CD8-positive, alpha-beta T cell (primary cell): ENCODE measurements at regions of chr1 and their contacts with region 1.

Region 1: DNA sequence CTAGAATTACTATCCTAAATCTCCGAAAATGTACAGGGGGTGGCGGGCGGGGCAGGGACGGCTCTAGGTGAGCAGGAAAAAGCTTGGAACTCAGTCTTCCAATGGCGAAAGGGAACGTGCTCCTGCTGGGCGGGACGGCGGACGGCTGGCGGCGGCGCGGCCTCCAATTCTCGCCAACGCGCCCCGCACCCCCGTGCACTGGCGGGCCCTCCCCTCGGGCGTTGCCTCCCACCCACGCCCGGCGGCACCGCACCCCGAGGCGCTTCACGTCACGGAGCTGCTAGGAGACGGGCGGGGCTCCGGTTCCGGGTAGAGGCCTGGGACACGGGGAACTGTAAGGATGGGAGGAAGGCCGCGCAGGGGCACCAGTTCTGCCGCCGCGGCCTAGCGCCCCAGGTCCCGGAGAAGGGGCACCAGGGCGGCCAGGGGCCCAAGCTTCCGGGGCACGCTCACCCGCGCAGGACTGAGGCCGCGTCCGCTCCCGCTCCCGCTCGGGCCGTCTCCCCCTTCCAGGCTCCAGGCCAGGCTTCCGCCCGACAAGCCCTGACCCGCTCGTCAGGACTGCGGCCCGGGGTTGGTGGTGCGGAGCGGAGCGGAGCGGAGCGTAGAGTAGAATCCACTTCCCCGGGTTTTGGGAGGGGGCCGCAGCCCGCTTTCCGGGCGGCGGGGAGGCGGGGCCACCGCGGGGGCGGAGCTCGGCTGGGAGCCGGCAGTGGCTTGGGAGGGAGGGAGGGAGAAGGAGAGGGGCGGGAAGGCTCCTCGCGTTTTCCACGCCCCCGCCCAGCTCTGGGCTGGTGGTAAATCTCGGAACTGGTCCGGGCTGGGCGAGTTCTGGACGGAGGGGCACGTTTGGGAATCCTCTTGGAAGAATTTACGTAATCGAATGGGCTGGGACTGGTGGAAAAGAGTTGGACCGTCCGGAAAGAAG is at the start of gene DDX59:
- DNase-seq: peak; percentile 67 to 93 (median 89)
- ATAC-seq: peak; percentile 89
- H3K4me3 ChIP-seq: peak within 1 kb of the TSS; percentile 82 to 94
- H3K4me3 Mint-ChIP-seq: peak within 1 kb of the TSS; percentile 94
- H3K27ac ChIP-seq: peak within 1 kb of the TSS; percentile 95 to 98
- H3K27ac Mint-ChIP-seq: peak within 1 kb of the TSS; percentile 94
- H3K4me1 ChIP-seq: peaks cover 21% of the 10 kb centered on the region
- H3K4me1 Mint-ChIP-seq: peaks cover 42% of the 10 kb centered on the region
- H3K27me3 ChIP-seq: no peaks in the 10 kb centered on the region
- H3K27me3 Mint-ChIP-seq: no peaks in the 10 kb centered on the region
- CTCF ChIP-seq: no peak
- total RNA-seq, gene DDX59: 24.0 to 32.9 TPM

Region 2: DNA sequence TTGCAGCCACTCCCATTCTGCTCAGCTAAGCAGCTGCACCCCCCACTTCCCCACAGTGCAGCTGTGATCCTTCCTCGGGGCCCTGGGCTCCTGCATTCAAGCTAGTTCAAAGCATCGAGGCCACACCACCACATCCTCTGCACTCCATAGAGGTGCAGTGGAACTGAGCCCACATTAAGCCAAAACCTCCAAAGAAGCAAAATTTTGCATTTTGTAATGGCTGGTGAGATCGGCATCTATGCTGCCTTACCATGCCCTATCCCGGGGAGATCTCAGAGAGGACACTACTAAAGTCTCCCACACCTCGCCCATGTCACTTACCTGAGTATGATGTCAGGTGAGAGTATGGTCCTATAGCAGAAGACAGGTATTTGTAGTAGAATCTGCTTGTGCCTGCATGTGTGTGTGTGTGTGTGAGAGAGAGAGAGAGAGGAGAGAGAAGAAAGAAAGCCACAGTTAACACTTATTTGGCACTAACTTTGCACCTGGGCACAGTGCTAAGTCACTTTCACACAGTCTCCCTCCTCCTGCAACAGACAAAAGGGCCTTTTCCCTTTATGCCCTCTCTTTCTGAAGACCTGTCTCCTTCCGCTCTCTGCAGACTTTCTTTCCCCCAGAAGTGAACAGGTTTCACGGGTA is 138.8 kb before region 1 on chr1:
- CTCF ChIA-PET with region 1: no interaction called
- POLR2A ChIA-PET with region 1: no interaction called
- intact Hi-C with region 1: loop called in 1 of 2 experiments (anchors 5 kb)
- DNase-seq: peak; percentile 36 to 85 (median 55)
- ATAC-seq: peak; percentile 96
- H3K4me3 ChIP-seq: peak overlapping the region; percentile 12 to 27
- H3K4me3 Mint-ChIP-seq: peak overlapping the region; percentile 71
- H3K27ac ChIP-seq: peak overlapping the region; percentile 2 to 14
- H3K27ac Mint-ChIP-seq: peak overlapping the region; percentile 83
- H3K4me1 ChIP-seq: peaks cover 32% of the 10 kb centered on the region
- H3K4me1 Mint-ChIP-seq: peaks cover 40% of the 10 kb centered on the region
- H3K27me3 ChIP-seq: no peaks in the 10 kb centered on the region
- H3K27me3 Mint-ChIP-seq: no peaks in the 10 kb centered on the region
- CTCF ChIP-seq: no peak

Region 3: GRCh38 chr1:200558866-200559459 is 110.6 kb before region 1 on chr1:
- CTCF ChIA-PET with region 1: no interaction called
- POLR2A ChIA-PET with region 1: no interaction called
- intact Hi-C with region 1: no loop called
- DNase-seq: peak in 2 of 9 experiments; percentile 40 to 58
- ATAC-seq: no peak
- H3K4me3 ChIP-seq: no peak overlapping the region
- H3K4me3 Mint-ChIP-seq: no peak overlapping the region
- H3K27ac ChIP-seq: no peak overlapping the region
- H3K27ac Mint-ChIP-seq: no peak overlapping the region
- H3K4me1 ChIP-seq: no peaks in the 10 kb centered on the region
- H3K4me1 Mint-ChIP-seq: no peaks in the 10 kb centered on the region
- H3K27me3 ChIP-seq: no peaks in the 10 kb centered on the region
- H3K27me3 Mint-ChIP-seq: no peaks in the 10 kb centered on the region
- CTCF ChIP-seq: peak; percentile 58

Region 4: GRCh38 chr1:200738740-200739498 is 69.3 kb after region 1 on chr1 and contains the start of gene CAMSAP2:
- CTCF ChIA-PET with region 1: no interaction called
- POLR2A ChIA-PET with region 1: interaction called, 6 read pairs
- intact Hi-C with region 1: loop called (anchors 1 to 5 kb)
- DNase-seq: peak; percentile 16 to 78 (median 63)
- ATAC-seq: peak; percentile 68
- H3K4me3 ChIP-seq: peak within 1 kb of the TSS; percentile 82 to 84
- H3K4me3 Mint-ChIP-seq: peak within 1 kb of the TSS; percentile 93
- H3K27ac ChIP-seq: peak within 1 kb of the TSS; percentile 28 to 41
- H3K27ac Mint-ChIP-seq: peak within 1 kb of the TSS; percentile 84
- H3K4me1 ChIP-seq: peaks cover 25% of the 10 kb centered on the region
- H3K4me1 Mint-ChIP-seq: peaks cover 31% of the 10 kb centered on the region
- H3K27me3 ChIP-seq: peaks cover 0 to 4% of the 10 kb centered on the region in 2 experiments
- H3K27me3 Mint-ChIP-seq: no peaks in the 10 kb centered on the region
- CTCF ChIP-seq: no peak
- total RNA-seq, gene CAMSAP2: 1.7 to 2.2 TPM

Region 5: GRCh38 chr1:200819726-200820125 is 150.1 kb after region 1 on chr1:
- CTCF ChIA-PET with region 1: no interaction called
- POLR2A ChIA-PET with region 1: no interaction called
- intact Hi-C with region 1: no loop called
- DNase-seq: no peak
- ATAC-seq: no peak
- H3K4me3 ChIP-seq: no peak overlapping the region
- H3K4me3 Mint-ChIP-seq: no peak overlapping the region
- H3K27ac ChIP-seq: no peak overlapping the region
- H3K27ac Mint-ChIP-seq: no peak overlapping the region
- H3K4me1 ChIP-seq: no peaks in the 10 kb centered on the region
- H3K4me1 Mint-ChIP-seq: no peaks in the 10 kb centered on the region
- H3K27me3 ChIP-seq: no peaks in the 10 kb centered on the region
- H3K27me3 Mint-ChIP-seq: no peaks in the 10 kb centered on the region
- CTCF ChIP-seq: no peak